ENCODE measurements at regions of chr13 and their contacts with region 1.

Region 1: GRCh38 chr13:93151277-93151676 is 75.3 kb upstream of the GPC6 start:
- DNase-seq: peak in 1 of 2 experiments; percentile 35
- H3K4me3 ChIP-seq: no peak overlapping the region
- H3K27ac ChIP-seq: no peak overlapping the region
- H3K4me1 ChIP-seq: no peaks in the 10 kb centered on the region
- H3K27me3 ChIP-seq: no peaks in the 10 kb centered on the region
- CTCF ChIP-seq: no peak

Region 2: GRCh38 chr13:93660391-93661063 is 509.2 kb after region 1 on chr13:
- CTCF ChIA-PET with region 1: interaction called, 10 read pairs
- POLR2A ChIA-PET with region 1: no interaction called
- intact Hi-C with region 1: no loop called
- DNase-seq: no peak
- H3K4me3 ChIP-seq: no peak overlapping the region
- H3K27ac ChIP-seq: no peak overlapping the region
- H3K4me1 ChIP-seq: no peaks in the 10 kb centered on the region
- H3K27me3 ChIP-seq: no peaks in the 10 kb centered on the region
- CTCF ChIP-seq: no peak

Measured in PC-9 (cell line).